Colonic mucosa (tissue), 4 donors: ENCODE measurements at regions of chr3 and their contacts with region 1.

Region 1: GRCh38 chr3:5181469-5182141 is 5.9 kb upstream of the EDEM1 start:
- DNase-seq: no peak
- H3K4me3 ChIP-seq: no peak overlapping the region
- H3K27ac ChIP-seq: no peak overlapping the region
- H3K4me1 ChIP-seq: no peaks in the 10 kb centered on the region
- H3K27me3 ChIP-seq: no peaks in the 10 kb centered on the region
- CTCF ChIP-seq: no peak

Region 2: GRCh38 chr3:5144316-5145011 is 37.1 kb before region 1 on chr3:
- intact Hi-C with region 1: loop called (anchors 5 kb)
- DNase-seq: no peak
- H3K4me3 ChIP-seq: no peak overlapping the region
- H3K27ac ChIP-seq: no peak overlapping the region
- H3K4me1 ChIP-seq: no peaks in the 10 kb centered on the region
- H3K27me3 ChIP-seq: no peaks in the 10 kb centered on the region
- CTCF ChIP-seq: no peak

Region 3: DNA sequence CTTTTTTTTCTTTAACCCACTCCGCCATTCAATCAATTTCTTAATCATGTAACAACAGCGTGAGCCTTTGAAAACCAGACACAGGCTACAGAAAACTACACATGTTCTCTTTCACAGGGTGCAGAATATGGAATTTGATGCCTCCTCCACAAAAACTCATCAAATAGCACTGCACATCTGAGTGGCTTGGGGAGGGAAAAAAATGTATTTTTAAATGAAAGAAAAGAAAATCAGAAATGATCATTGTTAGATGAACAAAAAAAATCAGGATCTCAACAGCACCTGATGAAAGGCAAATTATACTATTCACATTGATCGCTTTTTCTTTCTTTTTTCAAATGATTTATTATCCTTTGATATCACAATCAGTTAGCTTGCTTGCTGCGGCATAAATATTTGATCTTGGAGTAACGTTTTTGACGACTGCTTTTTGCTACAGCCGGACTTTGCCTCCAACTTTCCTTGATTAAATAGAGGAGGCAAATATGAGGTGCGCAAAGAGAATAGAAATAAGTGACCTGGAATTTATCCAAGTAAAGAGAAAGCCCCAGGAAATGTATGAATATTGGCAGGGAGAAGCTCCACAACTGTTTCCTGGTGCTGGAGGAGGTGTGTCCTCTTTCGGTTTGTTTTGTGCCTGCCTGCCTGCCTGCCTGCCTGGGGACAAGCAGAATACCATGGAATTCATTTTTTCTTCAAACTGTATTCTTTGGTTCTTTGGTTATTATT is 69.0 kb after region 1 on chr3:
- intact Hi-C with region 1: no loop called
- DNase-seq: peak; percentile 38
- H3K4me3 ChIP-seq: peak overlapping the region; percentile 22
- H3K27ac ChIP-seq: no peak overlapping the region
- H3K4me1 ChIP-seq: no peaks in the 10 kb centered on the region
- H3K27me3 ChIP-seq: no peaks in the 10 kb centered on the region
- CTCF ChIP-seq: no peak